ENCODE measurements at regions of chr9 and their contacts with region 1.

Region 1: DNA sequence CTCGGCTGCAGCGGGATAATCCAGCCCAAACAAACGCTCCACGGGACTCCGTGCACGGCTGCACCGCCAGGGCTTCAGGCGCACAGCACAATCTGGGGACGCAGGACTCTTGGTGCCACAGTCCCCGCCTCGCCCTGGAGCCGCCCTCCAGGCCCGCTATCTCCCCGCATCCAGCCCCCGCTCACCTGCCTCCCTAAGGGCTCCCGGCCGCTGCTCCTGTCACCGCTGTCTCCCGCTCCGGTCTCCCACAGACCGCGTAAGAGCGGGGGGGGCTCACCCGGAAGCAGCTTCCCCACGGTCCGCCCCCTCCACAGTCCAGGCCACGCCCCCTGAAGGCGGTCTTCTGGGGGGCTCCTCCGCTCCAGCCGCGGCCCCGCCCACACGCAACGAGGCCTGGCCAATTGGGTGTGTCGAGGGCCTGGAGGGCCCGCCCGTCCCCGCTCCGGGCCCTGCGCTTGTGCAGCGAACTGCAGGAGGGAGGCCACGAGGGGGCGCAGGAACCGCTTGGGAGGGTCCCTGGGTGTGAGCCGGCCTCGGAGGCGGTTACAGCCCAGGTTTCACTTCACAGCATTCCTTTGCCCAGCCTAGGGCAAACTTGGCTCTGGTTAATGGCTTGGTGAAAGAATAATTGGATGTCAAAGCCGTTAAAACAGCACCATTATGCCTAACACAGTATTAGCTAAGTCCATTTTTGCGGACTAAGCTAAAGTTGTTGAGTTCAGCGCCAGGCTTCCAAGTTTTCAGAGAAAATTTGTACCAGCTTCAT is at the start of gene ALAD:
- DNase-seq: peak; percentile 99
- H3K4me3 ChIP-seq: peak within 1 kb of the TSS; percentile 66 to 96 (median 92)
- H3K27ac ChIP-seq: peak within 1 kb of the TSS; percentile 40 to 66
- H3K4me1 ChIP-seq: peaks cover 4 to 22% (median 17%) of the 10 kb centered on the region in 4 experiments
- H3K27me3 ChIP-seq: no peaks in the 10 kb centered on the region

Region 2: DNA sequence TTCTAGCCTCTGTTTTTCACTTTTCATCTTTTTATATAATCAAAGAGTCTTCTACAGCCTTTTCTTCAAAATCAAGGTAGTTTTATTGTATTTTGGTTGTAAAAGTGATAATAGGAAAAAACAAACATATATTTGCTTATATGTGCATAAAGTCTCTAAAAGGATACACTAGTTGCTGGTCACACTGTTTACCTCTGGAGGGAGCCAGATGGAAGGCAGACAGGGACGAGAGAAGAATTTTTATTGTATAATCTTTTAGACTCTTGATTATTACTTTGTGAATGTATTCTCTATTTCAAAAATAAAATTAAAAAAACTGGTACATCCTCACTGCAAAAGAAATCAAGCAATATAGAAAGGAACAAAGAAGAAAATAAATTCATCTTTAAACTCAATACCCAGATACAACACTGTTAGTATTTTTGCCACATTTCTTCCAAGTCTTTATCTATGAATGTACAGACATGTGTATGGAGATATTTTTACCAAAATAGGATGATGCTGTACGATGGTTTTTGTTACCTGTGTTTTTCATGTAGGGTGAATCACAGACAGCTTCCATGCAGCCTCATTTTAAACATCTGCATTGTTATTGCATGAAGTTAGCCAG is 91.9 kb before region 1 on chr9:
- CTCF ChIA-PET with region 1: interaction called, 14 read pairs
- POLR2A ChIA-PET with region 1: no interaction called
- DNase-seq: peak; percentile 50 to 72 (median 68)
- H3K4me3 ChIP-seq: no peak overlapping the region
- H3K27ac ChIP-seq: no peak overlapping the region
- H3K4me1 ChIP-seq: no peaks in the 10 kb centered on the region
- H3K27me3 ChIP-seq: no peaks in the 10 kb centered on the region

Region 3: DNA sequence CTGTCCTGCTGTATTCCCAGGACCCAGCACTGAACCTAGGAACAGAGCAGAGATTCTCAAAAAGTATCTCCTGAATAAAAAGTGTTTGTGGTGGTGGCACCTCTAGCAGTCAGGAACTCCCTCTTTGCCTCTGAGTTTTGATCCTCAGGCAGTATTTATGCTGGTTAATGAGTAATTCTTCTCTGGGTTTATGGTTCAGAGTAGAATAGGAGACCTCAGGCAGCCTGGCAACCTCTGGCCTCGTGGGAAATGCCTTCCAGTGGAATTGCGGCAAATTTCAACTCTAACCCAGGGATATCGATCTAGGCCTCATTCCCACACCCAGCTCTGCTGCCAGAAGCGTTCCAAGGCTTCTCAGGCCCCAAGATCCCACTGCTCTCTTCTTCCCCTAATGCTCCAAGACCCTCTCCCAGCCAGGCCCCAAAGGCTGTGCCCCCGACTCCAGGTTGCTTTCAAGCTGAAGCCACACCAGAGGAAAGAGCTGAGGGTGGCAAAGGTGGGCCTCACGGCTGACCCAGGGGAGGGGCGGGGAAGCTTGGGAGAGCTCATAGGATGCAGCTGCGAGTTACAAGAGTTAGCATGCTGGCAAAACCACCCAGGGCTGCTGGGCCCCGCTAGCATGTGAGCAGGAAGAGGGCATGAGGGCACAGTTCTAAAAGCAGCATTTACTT is 13.5 kb before region 1 on chr9:
- CTCF ChIA-PET with region 1: interaction called, 15 read pairs
- POLR2A ChIA-PET with region 1: no interaction called
- DNase-seq: no peak
- H3K4me3 ChIP-seq: no peak overlapping the region
- H3K27ac ChIP-seq: no peak overlapping the region
- H3K4me1 ChIP-seq: no peaks in the 10 kb centered on the region
- H3K27me3 ChIP-seq: no peaks in the 10 kb centered on the region